ENCODE measurements at regions of chr1 and their contacts with region 1.

Region 1: GRCh38 chr1:67642629-67643028 is 42.4 kb upstream of the GADD45A start:
- DNase-seq: no peak

Region 2: GRCh38 chr1:67347688-67348472 is 294.7 kb before region 1 on chr1:
- intact Hi-C with region 1: no loop called
- DNase-seq: no peak

Region 3: DNA sequence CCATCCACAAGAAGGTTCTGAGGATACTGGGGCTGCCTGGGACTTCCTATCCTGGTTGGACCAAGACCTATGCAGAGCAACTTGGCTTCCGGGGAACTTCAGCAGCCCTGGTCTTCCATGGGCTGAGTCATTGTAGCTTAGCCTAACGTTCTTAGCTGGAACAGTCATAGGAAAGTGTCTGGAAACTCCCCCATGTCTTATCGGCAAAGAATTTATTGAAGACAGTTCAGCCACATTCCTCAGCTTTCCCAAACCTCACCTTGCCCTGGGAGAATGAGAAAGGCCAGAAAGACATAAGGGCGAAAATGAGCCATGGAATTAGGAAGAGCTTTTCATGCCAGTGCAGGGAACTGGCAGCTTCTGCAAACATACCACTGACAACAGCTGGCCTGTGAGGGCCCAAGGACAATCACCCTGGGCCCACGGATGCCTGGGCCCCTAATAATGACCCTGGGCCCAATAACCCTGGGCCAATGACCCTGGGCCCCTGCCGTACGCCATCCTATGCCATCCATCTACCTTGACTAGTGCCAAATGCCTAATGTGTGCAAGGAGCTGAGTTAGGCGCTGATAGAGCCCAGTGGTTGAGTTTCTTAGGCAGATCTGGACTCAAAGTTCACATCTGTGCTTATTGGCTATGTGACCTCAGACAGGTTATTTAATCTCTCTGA is 72.0 kb before region 1 on chr1:
- intact Hi-C with region 1: loop called in 1 of 2 experiments (anchors 5 kb)
- DNase-seq: no peak